ENCODE measurements at regions of chr15 and their contacts with region 1.

Region 1: DNA sequence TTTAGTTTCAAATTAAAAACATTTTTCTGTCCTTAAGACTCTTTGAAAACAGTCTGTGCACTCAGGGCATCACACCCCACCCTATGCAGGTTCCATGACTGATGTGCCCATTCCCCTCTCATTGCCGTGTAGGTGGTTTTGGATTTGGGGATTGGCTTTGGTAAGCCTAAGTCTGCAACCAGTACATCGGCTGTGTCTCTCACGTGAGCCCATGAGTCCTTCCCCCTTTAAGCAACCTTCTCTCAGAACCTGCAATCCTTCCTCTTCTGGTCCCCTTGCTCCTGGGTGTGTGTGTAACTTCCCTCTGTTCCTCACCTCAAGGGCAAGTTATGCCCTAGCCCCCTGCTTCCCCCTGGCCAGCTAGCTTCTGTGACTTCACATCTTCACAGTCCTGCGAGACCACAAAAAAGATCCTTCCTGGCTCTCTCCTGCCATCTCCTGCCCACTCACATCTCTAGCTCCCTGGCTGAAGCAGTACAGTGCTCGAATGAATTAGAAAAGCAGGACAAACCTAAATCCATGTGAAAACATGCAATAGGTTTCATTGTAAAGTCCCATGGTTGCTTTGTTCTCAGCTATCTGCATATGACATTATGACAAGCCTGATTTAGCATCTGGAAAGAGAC is 126.7 kb downstream of the UACA start:
- DNase-seq: peak; percentile 25
- ATAC-seq: peak; percentile 76
- H3K4me3 Mint-ChIP-seq: no peak overlapping the region
- H3K27ac Mint-ChIP-seq: no peak overlapping the region
- H3K4me1 Mint-ChIP-seq: peaks cover 43% of the 10 kb centered on the region
- H3K27me3 Mint-ChIP-seq: no peaks in the 10 kb centered on the region
- CTCF ChIP-seq: no peak

Region 2: GRCh38 chr15:70535071-70535954 is 101.3 kb before region 1 on chr15:
- CTCF ChIA-PET with region 1: interaction called, 10 read pairs
- POLR2A ChIA-PET with region 1: no interaction called
- DNase-seq: no peak
- ATAC-seq: no peak
- H3K4me3 Mint-ChIP-seq: no peak overlapping the region
- H3K27ac Mint-ChIP-seq: no peak overlapping the region
- H3K4me1 Mint-ChIP-seq: peaks cover 27% of the 10 kb centered on the region
- H3K27me3 Mint-ChIP-seq: no peaks in the 10 kb centered on the region
- CTCF ChIP-seq: no peak

Region 3: DNA sequence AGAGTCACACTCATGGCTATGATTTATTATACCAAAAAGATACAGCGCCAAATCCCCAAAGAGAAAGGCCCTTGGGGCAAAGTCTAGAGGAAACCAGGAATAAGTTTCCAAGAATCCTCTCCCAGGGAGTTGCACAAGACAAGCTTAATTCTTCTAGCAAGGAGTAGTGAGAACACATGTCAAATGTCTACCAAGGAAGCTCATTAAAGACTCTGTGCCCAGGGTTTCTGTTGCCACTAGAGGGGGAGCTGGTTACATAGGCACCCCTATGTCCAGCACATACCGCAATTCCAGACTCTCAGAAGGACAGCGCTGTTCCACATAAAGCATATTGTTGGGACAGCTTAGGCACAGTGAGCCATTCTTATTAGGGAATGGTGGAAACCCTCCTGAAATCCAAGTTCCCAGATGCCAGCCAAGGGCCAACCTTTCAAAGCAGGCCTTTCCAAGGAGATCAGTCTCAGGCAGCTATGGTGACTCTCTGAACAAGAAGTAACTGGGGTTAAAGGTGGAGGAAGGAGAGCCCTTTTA is 67.5 kb before region 1 on chr15:
- CTCF ChIA-PET with region 1: interaction called, 48 read pairs
- POLR2A ChIA-PET with region 1: no interaction called
- DNase-seq: no peak
- ATAC-seq: peak; percentile 71
- H3K4me3 Mint-ChIP-seq: no peak overlapping the region
- H3K27ac Mint-ChIP-seq: no peak overlapping the region
- H3K4me1 Mint-ChIP-seq: peaks cover 6% of the 10 kb centered on the region
- H3K27me3 Mint-ChIP-seq: no peaks in the 10 kb centered on the region
- CTCF ChIP-seq: no peak

Region 4: DNA sequence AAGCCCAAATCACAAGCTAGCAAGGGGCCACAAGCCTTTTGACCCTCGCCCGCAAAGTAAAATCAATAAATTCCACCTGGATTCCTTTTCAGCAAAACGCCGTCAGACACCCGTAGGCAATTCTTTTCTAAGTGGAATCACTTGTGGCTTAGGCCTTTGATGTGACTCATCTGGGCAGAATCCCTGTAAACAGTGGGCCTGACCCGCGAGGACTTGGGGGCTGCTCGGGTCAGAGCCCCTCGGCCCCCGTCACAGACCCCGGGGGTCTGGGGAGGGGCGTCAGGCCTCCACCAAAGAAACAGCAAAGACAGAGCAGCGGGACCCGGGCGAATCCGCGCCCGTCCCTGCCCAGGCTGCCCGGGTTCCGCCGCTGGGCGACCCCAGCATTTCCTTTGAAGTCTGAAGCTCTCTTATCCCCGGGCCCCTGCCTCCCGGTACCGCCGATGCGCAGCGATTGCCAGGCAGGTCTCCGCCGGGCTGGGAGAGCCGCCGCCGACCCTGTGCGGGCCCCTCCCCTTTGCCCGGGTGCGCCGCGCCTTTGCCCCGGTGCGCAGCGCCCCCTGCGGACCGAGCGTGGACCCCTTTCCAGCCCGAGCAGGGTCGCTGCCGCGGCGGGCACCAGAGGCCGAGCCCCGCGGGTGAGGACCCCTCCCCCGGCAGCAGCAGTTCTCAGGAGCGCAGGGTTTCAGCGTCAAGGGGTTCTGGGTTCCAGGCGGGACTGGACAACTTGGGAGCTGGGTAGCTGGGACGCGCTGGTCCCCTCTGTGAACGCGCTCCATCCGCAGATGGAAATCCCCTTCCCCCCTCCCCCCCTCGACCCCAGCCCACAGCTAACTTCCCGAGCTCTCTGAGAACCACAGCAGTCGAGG is 51.6 kb before region 1 on chr15:
- CTCF ChIA-PET with region 1: interaction called, 11 read pairs
- POLR2A ChIA-PET with region 1: no interaction called
- DNase-seq: peak; percentile 84
- ATAC-seq: peak; percentile 92
- H3K4me3 Mint-ChIP-seq: peak overlapping the region; percentile 69
- H3K27ac Mint-ChIP-seq: no peak overlapping the region
- H3K4me1 Mint-ChIP-seq: peaks cover 22% of the 10 kb centered on the region
- H3K27me3 Mint-ChIP-seq: peaks cover 26% of the 10 kb centered on the region
- CTCF ChIP-seq: peak; percentile 65; the same call in 1 of the 2 replicates

Region 5: GRCh38 chr15:70815644-70816043 is 179.0 kb after region 1 on chr15:
- CTCF ChIA-PET with region 1: no interaction called
- POLR2A ChIA-PET with region 1: no interaction called
- DNase-seq: no peak
- ATAC-seq: no peak
- H3K4me3 Mint-ChIP-seq: no peak overlapping the region
- H3K27ac Mint-ChIP-seq: no peak overlapping the region
- H3K4me1 Mint-ChIP-seq: peaks cover 9% of the 10 kb centered on the region
- H3K27me3 Mint-ChIP-seq: no peaks in the 10 kb centered on the region; the same call in 1 of the 2 replicates
- CTCF ChIP-seq: no peak